ENCODE measurements at regions of chrX and their contacts with region 1.

Region 1: DNA sequence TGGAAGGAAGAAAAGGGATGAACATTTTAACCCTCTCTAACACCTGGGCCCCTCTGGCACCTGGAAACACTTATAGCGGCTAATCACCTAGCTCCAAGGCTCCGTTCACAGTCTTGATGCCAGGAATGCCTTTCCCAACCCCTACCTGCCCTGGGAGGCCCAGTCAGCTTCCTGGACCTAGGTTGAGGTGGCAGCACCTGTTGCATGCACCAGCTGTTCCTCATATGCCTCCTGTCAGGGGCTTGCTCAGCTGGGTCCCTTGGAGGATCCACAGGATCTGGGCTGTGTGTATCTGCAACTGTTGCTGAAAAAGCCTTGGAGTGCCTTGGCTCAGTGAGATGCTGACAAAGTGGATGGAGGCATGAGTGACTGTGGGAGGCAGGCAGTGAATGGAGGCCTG is 4.4 kb downstream of the CFP start:
- DNase-seq: no peak
- CTCF ChIP-seq: no peak

Region 2: GRCh38 chrX:47644557-47645091 is 19.3 kb after region 1 on chrX:
- CTCF ChIA-PET with region 1: interaction called, 10 read pairs
- POLR2A ChIA-PET with region 1: no interaction called
- DNase-seq: no peak
- CTCF ChIP-seq: peak; percentile 25